Transverse colon (tissue), 4 donors: ENCODE measurements at regions of chr17 and their contacts with region 1.

Region 1: DNA sequence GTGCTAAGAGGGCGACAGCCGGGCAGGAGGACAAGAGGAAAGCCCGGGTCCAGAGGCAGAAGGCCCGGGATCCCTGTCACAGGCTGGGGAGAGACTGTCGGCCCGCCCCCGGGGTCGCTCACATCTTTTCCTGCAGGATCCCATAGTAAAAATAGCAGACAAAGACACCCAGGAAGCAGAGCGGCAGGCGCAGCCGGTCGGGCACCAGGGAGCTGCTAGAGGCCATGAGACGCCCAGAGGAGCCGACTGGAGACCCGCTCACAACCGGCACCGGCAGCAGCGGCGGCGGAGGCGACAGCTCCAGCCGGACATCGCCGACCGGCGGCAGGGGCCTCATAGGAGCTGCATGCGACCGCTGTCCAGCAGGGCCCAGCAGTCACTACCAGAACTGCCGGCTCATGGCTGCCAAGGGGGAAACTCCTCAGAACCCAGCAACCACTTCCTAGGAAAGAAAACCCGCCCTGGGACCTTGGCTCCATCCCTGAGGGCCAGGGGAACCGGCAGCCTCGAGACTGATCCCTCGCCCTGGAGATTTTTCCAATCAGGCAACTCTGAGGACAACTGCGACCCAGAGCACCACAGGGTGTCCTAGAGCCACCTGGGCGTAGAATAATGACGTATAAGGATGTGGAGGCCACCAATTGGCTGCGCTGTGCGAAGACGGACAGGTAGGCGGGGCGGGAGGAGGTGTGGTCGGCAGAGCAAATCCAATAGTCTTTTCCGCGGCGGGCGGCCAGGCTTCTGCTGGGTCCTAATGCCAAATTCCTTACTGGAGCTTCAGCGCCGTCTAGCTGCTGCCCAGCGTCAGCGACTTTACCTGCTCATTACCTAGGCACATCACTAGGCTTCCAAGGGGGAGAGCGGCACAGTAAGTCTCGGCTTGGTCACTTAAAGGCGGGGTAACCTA is at the start of gene SLC35B1:
- DNase-seq: peak; percentile 99
- H3K4me3 ChIP-seq: peak within 1 kb of the TSS; percentile 83 to 99 (median 96)
- H3K27ac ChIP-seq: peak within 1 kb of the TSS; percentile 85 to 98 (median 92)
- H3K4me1 ChIP-seq: peaks cover 11 to 31% (median 15%) of the 10 kb centered on the region in 4 donors
- H3K27me3 ChIP-seq: no peaks in the 10 kb centered on the region
- CTCF ChIP-seq: peak; percentile 56 to 80 (median 66)
- EP300 ChIP-seq: no peak
- POLR2A ChIP-seq: peak; percentile 70
- total RNA-seq, gene SLC35B1: 23.5 to 73.3 (median 56.2) TPM

Region 2: GRCh38 chr17:49414622-49415350 is 293.1 kb before region 1 on chr17 and contains the start of gene PHB1:
- in situ Hi-C with region 1: loop called in 1 of 4 experiments (anchors 25 kb)
- intact Hi-C with region 1: no loop called
- DNase-seq: peak; percentile 97
- H3K4me3 ChIP-seq: peak within 1 kb of the TSS; percentile 64 to 92 (median 84)
- H3K27ac ChIP-seq: peak within 1 kb of the TSS; percentile 67 to 86 (median 78)
- H3K4me1 ChIP-seq: peaks cover 9 to 21% (median 14%) of the 10 kb centered on the region in 4 donors
- H3K27me3 ChIP-seq: no peaks in the 10 kb centered on the region
- CTCF ChIP-seq: no peak
- EP300 ChIP-seq: no peak
- POLR2A ChIP-seq: peak; percentile 78
- total RNA-seq, gene PHB1: 40.8 to 114 (median 74.4) TPM

Region 3: GRCh38 chr17:49575579-49576087 is 132.2 kb before region 1 on chr17 and contains the start of gene NXPH3:
- in situ Hi-C with region 1: loop called in 1 of 4 experiments (anchors 5 kb)
- intact Hi-C with region 1: no loop called
- DNase-seq: peak; percentile 74
- H3K4me3 ChIP-seq: peak within 1 kb of the TSS; percentile 51 to 71 (median 62)
- H3K27ac ChIP-seq: peak within 1 kb of the TSS; percentile 71 to 92 (median 82)
- H3K4me1 ChIP-seq: peaks cover 0 to 34% (median 28%) of the 10 kb centered on the region in 4 donors
- H3K27me3 ChIP-seq: peaks cover 45% of the 10 kb centered on the region
- CTCF ChIP-seq: peak in 3 of 5 experiments; percentile 33 to 58 (median 54)
- EP300 ChIP-seq: no peak
- POLR2A ChIP-seq: no peak
- total RNA-seq, gene NXPH3: 0.20 to 4.6 (median 2.6) TPM

Region 4: DNA sequence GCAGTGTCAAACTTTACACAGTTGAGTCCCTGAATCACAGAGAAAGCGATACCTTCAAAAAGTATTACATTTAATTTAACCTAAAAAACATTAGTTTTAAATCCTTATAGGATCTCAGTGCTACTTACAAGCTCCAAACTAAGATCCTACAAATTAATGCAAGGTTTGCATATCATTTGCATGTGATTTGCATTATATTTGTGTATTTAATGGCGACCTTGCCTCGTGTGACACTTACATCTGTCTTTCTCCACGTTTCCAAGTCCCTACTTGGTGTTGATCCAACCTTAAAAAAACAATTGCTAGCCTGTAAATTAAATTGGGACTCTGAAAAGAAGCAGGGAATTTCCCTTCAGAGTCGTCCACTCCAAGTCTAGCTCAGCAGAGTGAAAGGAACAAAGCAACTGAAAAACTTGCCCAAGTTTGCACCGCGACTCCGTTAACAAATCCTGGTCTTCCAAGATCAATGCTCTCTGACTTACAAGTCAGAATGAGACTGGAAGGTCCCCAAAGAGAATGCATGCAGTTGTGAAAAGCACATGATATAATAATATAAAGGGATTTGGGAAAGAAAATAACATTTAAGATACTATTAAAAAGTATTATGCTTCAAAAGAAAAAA is 56.8 kb after region 1 on chr17:
- in situ Hi-C with region 1: loop called in 1 of 4 experiments (anchors 5 kb)
- intact Hi-C with region 1: no loop called
- DNase-seq: no peak
- H3K4me3 ChIP-seq: peak overlapping the region in 3 of 4 donors; percentile 8 to 91 (median 89)
- H3K27ac ChIP-seq: peak overlapping the region; percentile 46 to 90 (median 88)
- H3K4me1 ChIP-seq: peaks cover 7 to 30% (median 9%) of the 10 kb centered on the region in 4 donors
- H3K27me3 ChIP-seq: peaks cover 3% of the 10 kb centered on the region
- CTCF ChIP-seq: no peak
- EP300 ChIP-seq: no peak
- POLR2A ChIP-seq: no peak

Region 5: GRCh38 chr17:49779739-49780231 is 71.9 kb after region 1 on chr17:
- in situ Hi-C with region 1: loop called in 2 of 4 experiments (anchors 10 kb)
- intact Hi-C with region 1: loop called (anchors 2 kb)
- DNase-seq: peak; percentile 28
- H3K4me3 ChIP-seq: no peak overlapping the region
- H3K27ac ChIP-seq: peak overlapping the region in 3 of 4 donors; percentile 17 to 30 (median 27)
- H3K4me1 ChIP-seq: peaks cover 0 to 47% (median 7%) of the 10 kb centered on the region in 4 donors
- H3K27me3 ChIP-seq: no peaks in the 10 kb centered on the region
- CTCF ChIP-seq: peak; percentile 40 to 62 (median 47)
- EP300 ChIP-seq: no peak
- POLR2A ChIP-seq: no peak

Region 6: GRCh38 chr17:49788478-49789242 is 80.8 kb after region 1 on chr17 and contains the start of gene KAT7:
- in situ Hi-C with region 1: loop called in 1 of 4 experiments (anchors 10 kb)
- intact Hi-C with region 1: no loop called
- DNase-seq: peak; percentile 99
- H3K4me3 ChIP-seq: peak within 1 kb of the TSS; percentile 69 to 96 (median 91)
- H3K27ac ChIP-seq: peak within 1 kb of the TSS; percentile 94 to 99 (median 99)
- H3K4me1 ChIP-seq: peaks cover 13 to 53% (median 22%) of the 10 kb centered on the region in 4 donors
- H3K27me3 ChIP-seq: no peaks in the 10 kb centered on the region
- CTCF ChIP-seq: peak in 1 of 5 experiments; percentile 19
- EP300 ChIP-seq: no peak
- POLR2A ChIP-seq: peak; percentile 93
- total RNA-seq, gene KAT7: 21.3 to 54.2 (median 32.8) TPM